ENCODE measurements at regions of chr11 and their contacts with region 1.

Region 1: DNA sequence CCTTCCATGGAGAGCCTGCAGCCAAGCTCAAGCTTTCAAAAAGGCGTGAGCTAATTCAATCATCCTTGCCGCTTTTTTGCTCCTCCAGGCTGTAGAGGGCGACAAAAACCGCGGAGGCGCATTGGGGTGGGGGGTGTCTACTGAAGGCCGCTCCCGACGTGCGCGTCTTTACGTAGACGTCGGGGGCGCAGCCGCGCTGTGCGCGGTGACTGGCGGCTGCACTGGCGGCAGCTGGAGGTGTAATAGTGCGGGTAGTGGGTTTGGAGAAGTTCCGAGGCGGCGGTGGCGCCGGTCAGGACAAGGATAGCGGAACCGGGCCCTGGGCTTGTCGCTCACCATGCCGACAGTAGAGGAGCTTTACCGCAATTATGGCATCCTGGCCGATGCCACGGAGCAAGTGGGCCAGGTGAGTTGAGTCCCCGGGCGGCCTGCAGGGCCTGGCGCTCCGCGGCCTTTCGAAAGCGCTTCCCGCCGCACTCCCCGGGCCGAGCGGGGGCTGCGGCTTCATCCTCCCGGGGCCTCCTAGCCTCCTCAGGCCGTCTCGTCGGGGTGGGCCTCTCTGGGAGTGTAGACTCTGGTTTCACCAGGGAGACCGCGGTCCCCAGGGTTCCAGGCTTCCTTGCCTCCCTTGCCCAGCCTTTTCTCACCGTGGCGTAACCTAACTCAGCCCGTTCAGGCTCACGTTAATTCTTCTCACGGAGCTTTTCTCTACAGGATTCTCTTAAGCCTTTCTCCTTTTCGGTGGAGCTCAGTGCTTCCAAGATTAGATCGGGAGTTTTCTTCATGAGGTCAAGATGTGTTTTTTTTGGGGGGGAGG is at the start of gene API5:
- DNase-seq: peak; percentile 63
- H3K4me3 ChIP-seq: peak within 1 kb of the TSS; percentile 68
- H3K27me3 ChIP-seq: no peaks in the 10 kb centered on the region
- CTCF ChIP-seq: peak; percentile 89
- polyA plus RNA-seq, gene API5: 29.3 and 58.2 TPM in 2 replicates

Region 2: GRCh38 chr11:42901084-42901483 is 410.9 kb before region 1 on chr11:
- CTCF ChIA-PET with region 1: no interaction called
- POLR2A ChIA-PET with region 1: no interaction called
- DNase-seq: no peak
- H3K4me3 ChIP-seq: no peak overlapping the region
- H3K27me3 ChIP-seq: no peaks in the 10 kb centered on the region
- CTCF ChIP-seq: no peak

Region 3: DNA sequence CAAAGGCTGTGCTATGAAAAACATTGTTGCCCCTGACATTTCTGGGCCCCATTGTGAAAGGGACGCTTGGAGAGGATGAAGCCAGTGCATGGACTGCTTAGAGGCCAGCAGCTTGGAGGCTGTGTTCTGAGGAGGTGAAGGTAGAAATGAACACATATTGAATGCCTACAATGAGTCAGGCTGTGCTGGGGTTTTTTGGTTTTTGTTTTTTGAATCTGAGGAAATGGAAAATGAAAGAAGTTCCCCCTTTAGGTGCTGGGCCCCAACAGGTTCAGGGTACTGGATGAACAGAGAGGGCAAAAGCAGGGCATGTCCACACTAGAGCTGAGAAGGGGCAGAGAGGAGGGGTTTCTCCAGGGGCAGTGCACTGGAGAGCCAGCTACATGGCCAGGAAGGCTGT is 166.3 kb before region 1 on chr11:
- CTCF ChIA-PET with region 1: no interaction called
- POLR2A ChIA-PET with region 1: no interaction called
- DNase-seq: no peak
- H3K4me3 ChIP-seq: no peak overlapping the region
- H3K27me3 ChIP-seq: no peaks in the 10 kb centered on the region
- CTCF ChIP-seq: no peak

Region 4: GRCh38 chr11:43298397-43298796 is 13.6 kb before region 1 on chr11:
- CTCF ChIA-PET with region 1: interaction called, 11 read pairs
- POLR2A ChIA-PET with region 1: no interaction called
- DNase-seq: no peak
- H3K4me3 ChIP-seq: no peak overlapping the region
- H3K27me3 ChIP-seq: no peaks in the 10 kb centered on the region
- CTCF ChIP-seq: no peak

Measured in BJ (cell line).